ENCODE measurements at regions of chr7 and their contacts with region 1.

Region 1: GRCh38 chr7:47979145-47979831 is at the start of gene HUS1:
- DNase-seq: peak; percentile 71 to 96
- H3K4me3 ChIP-seq: peak within 1 kb of the TSS; percentile 61 to 88
- H3K27ac ChIP-seq: peak within 1 kb of the TSS; percentile 87 to 89
- H3K4me1 ChIP-seq: peaks cover 4 to 15% of the 10 kb centered on the region in 2 donors
- H3K27me3 ChIP-seq: no peaks in the 10 kb centered on the region
- CTCF ChIP-seq: no peak
- total RNA-seq, gene HUS1: 30.4 TPM

Region 2: GRCh38 chr7:47945261-47946001 is 33.9 kb before region 1 on chr7:
- intact Hi-C with region 1: loop called (anchors 1 kb)
- DNase-seq: peak in 1 of 2 donors; percentile 88
- H3K4me3 ChIP-seq: no peak overlapping the region
- H3K27ac ChIP-seq: no peak overlapping the region
- H3K4me1 ChIP-seq: peaks cover 7 to 12% of the 10 kb centered on the region in 2 donors
- H3K27me3 ChIP-seq: no peaks in the 10 kb centered on the region
- CTCF ChIP-seq: peak; percentile 51 to 84 (median 83)

Region 3: DNA sequence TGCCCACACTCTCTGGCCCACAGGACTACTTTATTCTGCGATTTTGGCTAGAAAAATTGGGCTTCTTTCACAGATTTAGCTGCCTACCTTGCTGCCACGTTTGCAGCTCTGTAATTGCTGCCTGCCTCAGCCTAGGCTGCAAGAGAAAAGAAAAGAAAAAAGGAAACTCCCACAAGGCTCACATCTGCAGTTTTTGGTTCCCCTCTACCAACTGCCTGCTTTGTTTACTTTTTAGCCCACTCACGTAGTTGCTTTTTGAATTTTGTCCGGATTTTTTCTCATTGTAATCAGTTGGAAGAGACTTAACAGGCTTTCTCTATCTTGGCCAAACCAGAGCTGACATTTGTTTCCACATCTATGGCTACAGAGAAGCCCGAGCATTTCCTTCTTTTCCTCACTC is 25.4 kb after region 1 on chr7:
- intact Hi-C with region 1: no loop called
- DNase-seq: no peak
- H3K4me3 ChIP-seq: no peak overlapping the region
- H3K27ac ChIP-seq: no peak overlapping the region
- H3K4me1 ChIP-seq: no peaks in the 10 kb centered on the region
- H3K27me3 ChIP-seq: no peaks in the 10 kb centered on the region
- CTCF ChIP-seq: no peak

Region 4: DNA sequence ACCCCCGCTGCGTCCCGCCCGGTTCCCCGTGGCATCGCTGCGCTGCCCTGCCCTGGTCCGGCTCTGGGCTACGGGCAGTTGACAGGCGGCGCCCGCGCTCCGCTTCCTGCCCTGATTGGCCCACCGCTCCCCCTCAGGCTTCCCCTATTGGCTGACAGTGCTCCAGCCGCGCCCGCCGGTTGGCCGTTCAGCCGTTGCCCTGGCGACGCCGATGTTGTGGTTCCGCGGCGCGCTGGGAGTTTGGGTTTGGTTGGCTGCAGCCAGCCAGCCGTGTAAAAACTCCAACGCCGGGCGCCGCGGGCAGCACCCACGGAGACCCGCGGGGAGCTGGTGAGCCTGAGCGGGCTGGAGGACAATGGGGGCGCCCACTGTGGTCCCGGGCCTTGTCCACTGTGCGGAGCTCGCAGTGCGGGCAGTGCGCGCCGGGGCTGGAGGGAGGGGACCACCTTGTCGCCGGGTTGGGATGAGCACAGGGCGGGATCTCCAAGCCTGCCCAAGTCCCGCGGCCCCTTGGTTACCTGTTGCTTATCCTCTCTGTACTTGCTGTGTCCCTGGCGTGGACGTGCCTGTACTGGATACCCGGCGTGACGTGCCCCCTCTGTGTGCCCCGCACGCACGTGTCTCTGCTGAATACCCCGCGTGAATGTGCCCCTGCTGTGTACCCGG is 56.1 kb after region 1 on chr7 and contains the start of gene C7orf57:
- intact Hi-C with region 1: loop called (anchors 1 kb)
- DNase-seq: peak; percentile 70 to 94
- H3K4me3 ChIP-seq: peak within 1 kb of the TSS; percentile 51 to 73
- H3K27ac ChIP-seq: no peak within 1 kb of the TSS
- H3K4me1 ChIP-seq: peaks cover 0 to 8% of the 10 kb centered on the region in 2 donors
- H3K27me3 ChIP-seq: no peaks in the 10 kb centered on the region
- CTCF ChIP-seq: peak in 2 of 3 experiments; percentile 51 to 53
- total RNA-seq, gene C7orf57: not detected

Region 5: GRCh38 chr7:48168159-48168558 is 188.9 kb after region 1 on chr7:
- intact Hi-C with region 1: no loop called
- DNase-seq: no peak
- H3K4me3 ChIP-seq: no peak overlapping the region
- H3K27ac ChIP-seq: no peak overlapping the region
- H3K4me1 ChIP-seq: no peaks in the 10 kb centered on the region
- H3K27me3 ChIP-seq: no peaks in the 10 kb centered on the region
- CTCF ChIP-seq: no peak

Measured in ascending aorta (tissue), 2 donors.